ENCODE measurements at regions of chr14 and their contacts with region 1.

Region 1: DNA sequence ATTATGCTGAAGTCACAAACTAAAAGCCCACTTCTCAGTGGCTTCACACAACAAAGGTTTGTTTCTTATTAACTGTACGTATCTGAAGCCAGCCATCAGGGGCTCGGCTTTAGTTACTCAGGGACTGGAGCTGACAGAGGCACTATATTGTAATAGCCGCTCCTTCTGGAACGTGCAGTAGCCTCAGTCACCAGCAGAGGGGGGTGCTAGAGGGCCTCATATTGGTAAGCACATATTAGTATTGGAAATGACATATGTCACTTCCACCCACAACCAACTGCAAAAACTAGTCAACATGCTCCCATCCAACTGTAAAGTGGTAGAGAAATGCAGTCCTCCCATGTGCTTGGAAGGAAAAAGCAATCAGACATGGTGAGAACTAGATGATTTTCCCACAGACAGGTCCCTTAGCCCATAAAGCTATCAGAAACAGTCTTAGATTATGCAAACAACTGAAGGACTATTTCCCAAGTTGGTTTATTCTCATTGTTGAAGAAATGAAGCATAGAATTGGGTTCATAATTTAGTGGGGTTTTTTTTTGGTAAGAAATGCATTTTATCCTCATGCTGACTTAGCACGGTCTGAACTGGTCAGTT is 183.6 kb upstream of the G2E3 start:
- H3K4me3 ChIP-seq: no peak overlapping the region
- H3K27ac ChIP-seq: no peak overlapping the region
- H3K4me1 ChIP-seq: no peaks in the 10 kb centered on the region
- CTCF ChIP-seq: no peak

Region 2: GRCh38 chr14:30385925-30386324 is 10.5 kb after region 1 on chr14:
- CTCF ChIA-PET with region 1: interaction called, 15 read pairs
- POLR2A ChIA-PET with region 1: no interaction called
- H3K4me3 ChIP-seq: no peak overlapping the region
- H3K27ac ChIP-seq: no peak overlapping the region
- H3K4me1 ChIP-seq: no peaks in the 10 kb centered on the region
- CTCF ChIP-seq: no peak

Measured in HEK293 (cell line).